ENCODE measurements at regions of chr7 and their contacts with region 1.

Region 1: DNA sequence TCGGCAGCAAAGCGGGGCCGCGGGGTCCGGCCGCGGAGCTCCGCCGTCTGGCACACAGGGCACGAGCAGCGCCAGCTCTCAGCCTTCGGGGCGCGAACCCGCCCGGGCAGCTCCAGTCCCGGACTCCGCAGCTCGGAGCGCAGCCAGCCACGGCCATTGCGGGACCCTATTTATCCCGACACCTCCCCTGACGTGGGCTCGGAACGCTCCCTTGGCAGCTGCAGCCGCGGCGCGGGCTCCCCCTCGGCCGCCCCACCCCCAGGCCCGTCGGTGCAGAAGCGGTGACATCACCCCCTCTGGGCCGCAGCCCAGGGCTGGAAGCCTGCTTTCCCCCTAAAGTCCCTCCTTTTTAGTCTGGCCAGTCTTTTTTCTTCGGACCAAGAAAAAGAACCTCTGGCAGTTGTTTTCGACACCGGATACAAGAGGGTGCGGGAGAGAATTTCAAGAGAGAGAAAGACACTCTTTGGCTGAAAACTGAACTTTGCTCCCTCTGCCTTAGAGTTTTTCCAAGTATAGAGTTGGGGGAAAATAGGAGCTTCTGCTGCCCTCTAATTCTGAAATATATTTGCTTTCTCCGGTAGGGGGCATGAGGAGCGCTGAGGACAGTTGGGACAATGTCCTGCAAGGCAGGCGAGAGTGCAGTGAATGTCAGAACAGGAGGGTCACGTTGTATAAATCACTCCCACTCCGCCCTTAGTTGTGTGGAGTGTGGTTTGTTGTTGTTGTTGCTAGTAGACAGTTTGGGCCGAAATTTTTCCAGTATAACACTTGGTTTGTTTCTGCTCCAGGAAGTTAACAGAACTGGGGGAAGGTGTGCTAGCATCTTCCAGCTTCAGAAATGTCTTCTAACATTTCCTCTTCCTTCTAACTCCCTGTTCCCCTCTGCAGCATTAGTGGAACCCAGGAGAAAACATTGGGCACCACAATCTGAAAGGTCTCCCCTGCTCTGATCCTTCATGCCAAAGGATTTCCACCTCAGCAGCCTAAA is at the start of gene SFRP4:
- DNase-seq: peak; percentile 17 to 86
- H3K4me3 ChIP-seq: peak within 1 kb of the TSS; percentile 67 to 74
- H3K27ac ChIP-seq: peak within 1 kb of the TSS; percentile 88
- H3K4me1 ChIP-seq: peaks cover 0 to 6% of the 10 kb centered on the region in 2 donors
- H3K27me3 ChIP-seq: no peaks in the 10 kb centered on the region
- CTCF ChIP-seq: peak; percentile 56 to 76 (median 73)
- total RNA-seq, gene SFRP4: 25.7 TPM

Region 2: GRCh38 chr7:37728757-37729156 is 188.2 kb before region 1 on chr7:
- intact Hi-C with region 1: loop called (anchors 10 kb)
- DNase-seq: no peak
- H3K4me3 ChIP-seq: no peak overlapping the region
- H3K27ac ChIP-seq: peak overlapping the region; percentile 71 to 83
- H3K4me1 ChIP-seq: peaks cover 6 to 25% of the 10 kb centered on the region in 2 donors
- H3K27me3 ChIP-seq: no peaks in the 10 kb centered on the region
- CTCF ChIP-seq: no peak

Region 3: GRCh38 chr7:37882086-37882485 is 34.9 kb before region 1 on chr7:
- intact Hi-C with region 1: no loop called
- DNase-seq: no peak
- H3K4me3 ChIP-seq: no peak overlapping the region
- H3K27ac ChIP-seq: no peak overlapping the region
- H3K4me1 ChIP-seq: no peaks in the 10 kb centered on the region
- H3K27me3 ChIP-seq: no peaks in the 10 kb centered on the region
- CTCF ChIP-seq: no peak

Region 4: DNA sequence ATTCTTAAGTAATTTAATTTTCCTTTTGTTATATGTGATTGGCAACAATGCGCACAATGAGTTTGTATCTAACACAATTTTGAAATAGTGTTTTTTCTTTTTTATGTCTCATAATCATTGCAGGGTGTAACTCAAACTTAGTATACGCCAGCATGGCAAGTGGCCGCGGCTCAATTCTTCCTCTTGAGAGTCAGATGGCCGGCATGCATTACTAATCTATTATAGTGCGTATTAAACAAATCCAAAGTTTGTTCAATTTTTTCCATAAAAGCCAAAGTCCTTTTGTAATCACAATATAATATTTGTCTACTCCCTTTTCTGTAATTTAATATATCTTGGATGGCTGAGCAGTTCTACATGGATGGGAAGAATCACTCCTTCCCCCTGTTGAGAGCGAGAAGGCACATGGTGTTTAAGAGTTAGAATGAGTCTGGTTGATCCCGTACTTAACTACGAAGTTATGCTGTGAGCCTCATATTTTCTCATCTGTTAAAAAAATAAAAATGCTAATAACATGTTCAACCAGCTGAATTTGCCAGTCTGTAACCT is 16.1 kb after region 1 on chr7:
- intact Hi-C with region 1: no loop called
- DNase-seq: no peak
- H3K4me3 ChIP-seq: no peak overlapping the region
- H3K27ac ChIP-seq: no peak overlapping the region
- H3K4me1 ChIP-seq: no peaks in the 10 kb centered on the region
- H3K27me3 ChIP-seq: no peaks in the 10 kb centered on the region
- CTCF ChIP-seq: no peak

Region 5: GRCh38 chr7:38107486-38107893 is 190.5 kb after region 1 on chr7:
- intact Hi-C with region 1: loop called (anchors 5 kb)
- DNase-seq: peak in 1 of 2 donors; percentile 78
- H3K4me3 ChIP-seq: no peak overlapping the region
- H3K27ac ChIP-seq: no peak overlapping the region
- H3K4me1 ChIP-seq: no peaks in the 10 kb centered on the region
- H3K27me3 ChIP-seq: no peaks in the 10 kb centered on the region
- CTCF ChIP-seq: peak; percentile 33 to 81 (median 67)

Region 6: DNA sequence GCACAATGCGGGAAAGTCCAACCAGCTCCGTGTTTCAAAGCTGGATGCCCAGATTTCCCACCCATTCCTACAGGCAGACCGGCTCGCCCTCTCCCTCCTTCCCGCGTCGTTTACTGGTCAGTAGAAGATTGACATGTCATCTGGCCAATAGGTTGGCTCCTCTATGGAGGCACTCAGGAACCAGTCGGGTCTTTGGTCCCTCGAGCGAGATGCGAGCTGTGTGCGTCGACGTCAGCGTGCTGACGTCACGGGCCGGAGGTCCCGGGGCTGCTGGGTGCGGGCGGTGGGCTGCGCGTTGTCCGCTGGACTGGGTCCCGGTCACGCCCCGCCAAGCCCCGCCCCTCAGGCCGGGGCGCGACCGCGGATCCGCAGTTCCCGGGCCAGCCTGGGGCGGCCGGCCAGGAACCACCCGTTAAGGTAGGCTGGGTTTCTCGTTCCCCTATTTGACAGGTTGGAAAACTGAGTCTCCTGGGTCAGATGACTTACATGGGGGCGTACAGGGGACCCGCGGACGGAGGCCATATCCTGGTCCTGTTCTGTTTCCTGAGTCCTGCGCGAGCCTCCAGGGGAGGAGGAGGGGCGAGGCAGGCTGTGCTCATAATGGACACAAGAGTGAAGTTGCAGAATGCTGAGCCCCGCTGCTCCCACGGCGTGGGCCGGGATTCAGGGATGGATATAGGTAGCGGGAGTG is 261.2 kb after region 1 on chr7 and contains the start of gene STARD3NL:
- intact Hi-C with region 1: loop called (anchors 1 kb)
- DNase-seq: peak; percentile 99
- H3K4me3 ChIP-seq: peak within 1 kb of the TSS; percentile 62 to 86
- H3K27ac ChIP-seq: peak within 1 kb of the TSS; percentile 90 to 94
- H3K4me1 ChIP-seq: peaks cover 6% of the 10 kb centered on the region in 2 donors
- H3K27me3 ChIP-seq: no peaks in the 10 kb centered on the region
- CTCF ChIP-seq: peak in 1 of 3 experiments; percentile 24
- total RNA-seq, gene STARD3NL: 19.7 TPM

Region 7: GRCh38 chr7:38222481-38223096 is 305.6 kb after region 1 on chr7:
- intact Hi-C with region 1: loop called (anchors 5 kb)
- DNase-seq: no peak
- H3K4me3 ChIP-seq: no peak overlapping the region
- H3K27ac ChIP-seq: peak overlapping the region; percentile 29 to 56
- H3K4me1 ChIP-seq: no peaks in the 10 kb centered on the region
- H3K27me3 ChIP-seq: no peaks in the 10 kb centered on the region
- CTCF ChIP-seq: peak; percentile 65 to 92 (median 76)

Measured in ascending aorta (tissue), 2 donors.